GM10248 (cell line): ENCODE measurements at regions of chr2 and their contacts with region 1.

Region 1: GRCh38 chr2:200901459-200902072 is 12.4 kb downstream of the NIF3L1 start:
- DNase-seq: peak; percentile 82
- CTCF ChIP-seq: peak; percentile 64

Region 2: DNA sequence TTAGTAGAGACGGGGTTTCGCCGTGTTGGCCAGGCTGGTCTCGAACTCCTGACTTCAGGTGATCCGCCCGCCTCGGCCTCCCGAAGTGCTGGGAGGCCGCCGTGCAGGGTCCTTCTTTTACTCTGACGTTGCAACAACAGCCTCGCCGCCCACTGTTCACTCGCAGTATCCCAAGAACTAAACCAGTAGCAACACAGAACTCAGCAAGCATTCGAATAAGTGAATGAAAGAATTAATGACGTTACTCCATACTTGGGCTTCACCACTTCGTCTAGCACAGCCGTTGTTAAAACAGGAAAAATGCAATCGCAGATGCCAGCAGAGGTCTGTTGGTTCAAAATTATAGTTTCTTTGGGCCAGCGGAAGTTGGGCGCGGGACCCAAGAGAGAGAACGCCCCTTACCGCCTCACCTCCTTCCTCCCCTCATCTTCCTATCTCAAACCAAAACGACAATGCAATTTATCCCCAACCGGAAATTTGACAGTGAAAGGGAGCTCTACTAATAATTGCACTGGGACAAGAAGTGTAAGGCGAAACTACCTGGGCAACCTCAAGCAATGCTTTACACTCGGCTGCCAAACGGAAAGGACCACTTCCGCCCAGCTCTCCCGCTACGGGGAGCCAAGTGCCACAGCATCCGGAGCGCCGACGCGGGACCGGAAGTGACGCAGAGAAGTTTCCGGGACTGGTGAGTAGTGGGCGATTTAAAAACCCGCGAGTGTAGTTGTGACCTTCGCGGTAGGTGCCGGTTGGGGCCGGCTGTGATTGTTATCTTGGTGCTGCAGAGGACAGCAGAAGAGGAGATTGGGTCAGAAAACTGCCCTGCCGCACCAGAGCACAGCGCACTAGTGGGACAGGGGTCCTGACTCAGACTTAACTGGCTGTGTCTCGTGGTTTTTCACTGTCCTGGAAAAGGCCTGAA is 12.6 kb before region 1 on chr2 and contains the starts of genes NIF3L1 and PPIL3:
- CTCF ChIA-PET with region 1: interaction called, 14 read pairs
- POLR2A ChIA-PET with region 1: no interaction called
- DNase-seq: peak; percentile 91
- CTCF ChIP-seq: no peak

Region 3: DNA sequence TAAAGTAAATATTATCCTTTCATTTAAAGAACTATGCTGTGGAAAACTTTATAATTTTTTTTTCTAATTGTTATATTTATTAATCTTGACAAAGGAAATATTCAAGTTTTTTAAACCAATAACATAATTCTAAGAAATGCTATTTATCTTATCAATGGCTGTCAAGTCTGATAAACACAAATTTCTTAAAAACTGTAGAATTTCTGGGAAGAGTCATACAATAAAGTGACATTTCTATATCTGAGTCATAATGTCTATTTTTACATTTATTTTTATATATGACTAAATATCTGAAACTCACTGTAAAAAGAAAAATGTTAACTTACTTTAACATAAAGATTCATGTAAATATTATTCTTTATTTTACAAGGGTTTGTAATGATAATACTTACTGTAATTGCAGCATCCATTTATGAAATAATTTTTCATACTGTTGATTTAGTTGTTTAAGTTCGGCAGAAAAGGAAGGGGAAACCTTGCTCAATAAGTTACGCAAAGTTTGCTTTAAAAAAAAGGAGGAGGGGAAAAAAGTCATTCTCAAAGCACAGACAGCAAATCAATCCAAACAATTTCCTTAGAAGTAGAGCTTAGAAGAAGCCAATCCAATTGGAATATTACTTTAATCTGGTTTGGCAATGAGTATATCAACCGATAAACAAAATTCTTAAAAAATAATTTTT is 29.5 kb after region 1 on chr2:
- CTCF ChIA-PET with region 1: interaction called, 11 read pairs
- POLR2A ChIA-PET with region 1: no interaction called
- DNase-seq: no peak
- CTCF ChIP-seq: no peak

Region 4: DNA sequence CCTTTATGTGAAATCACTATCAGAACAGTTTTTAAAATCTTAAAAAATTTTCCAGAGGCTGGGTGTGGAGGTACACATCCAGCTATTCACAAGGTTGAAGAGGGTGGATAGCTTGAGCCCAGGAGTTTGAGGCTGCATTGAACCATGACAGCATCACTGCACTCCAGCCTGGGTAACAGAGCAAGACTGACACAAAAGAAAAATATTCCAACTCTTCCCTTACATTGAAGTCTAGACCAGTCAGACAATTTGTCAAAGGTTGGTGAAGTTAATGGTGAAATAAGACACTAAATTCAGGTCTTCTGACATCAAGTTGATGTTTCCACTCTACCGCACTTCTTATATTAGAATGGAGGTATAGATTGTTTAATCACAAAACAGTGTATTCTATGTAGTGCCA is 117.1 kb after region 1 on chr2:
- CTCF ChIA-PET with region 1: no interaction called
- POLR2A ChIA-PET with region 1: no interaction called
- DNase-seq: no peak
- CTCF ChIP-seq: no peak

Region 5: DNA sequence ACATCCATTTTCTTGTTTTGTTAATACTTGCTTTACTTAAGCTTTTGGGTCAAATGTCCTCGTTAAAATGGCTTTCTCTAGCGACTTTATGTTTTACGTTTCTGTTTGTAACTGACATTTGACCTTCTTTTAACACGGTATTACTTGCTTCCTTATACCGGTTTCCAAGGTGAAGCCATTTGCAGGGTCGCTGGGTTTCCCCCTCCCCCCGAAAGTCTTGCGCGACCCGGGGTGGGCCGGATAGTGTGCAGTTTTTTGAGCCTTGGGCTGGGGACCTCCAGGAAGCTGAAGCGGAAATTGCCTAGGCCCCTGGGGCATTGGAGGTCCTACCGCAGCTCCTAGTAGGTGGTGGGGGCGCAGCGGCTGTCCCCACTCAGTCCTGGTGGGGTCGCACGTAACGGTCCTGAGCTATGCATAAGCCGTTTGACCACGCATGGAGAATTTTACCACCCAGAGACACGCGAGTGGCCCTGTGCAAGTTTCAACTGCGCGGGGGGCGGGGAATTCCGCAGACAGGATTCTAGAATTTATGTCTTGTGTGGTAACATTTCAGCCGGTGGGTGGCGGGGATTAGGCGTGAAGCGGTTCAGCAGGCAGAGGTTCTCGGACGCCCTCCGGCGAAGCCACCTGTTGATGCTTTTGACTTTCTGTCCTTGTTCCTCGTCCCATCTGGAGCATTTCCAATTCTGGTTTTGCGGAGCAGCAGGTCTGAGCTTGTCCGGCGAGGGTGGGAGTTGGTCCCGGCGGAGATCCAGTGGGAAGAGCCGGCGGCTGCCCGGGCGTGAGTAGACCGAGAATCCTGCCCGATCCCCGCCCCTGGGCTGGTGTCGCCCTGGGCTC is 216.8 kb after region 1 on chr2:
- CTCF ChIA-PET with region 1: interaction called, 19 read pairs
- POLR2A ChIA-PET with region 1: no interaction called
- DNase-seq: peak; percentile 73
- CTCF ChIP-seq: peak; percentile 39

Region 6: GRCh38 chr2:201194097-201194496 is 292.5 kb after region 1 on chr2:
- CTCF ChIA-PET with region 1: interaction called, 13 read pairs
- POLR2A ChIA-PET with region 1: no interaction called
- DNase-seq: peak; percentile 73
- CTCF ChIP-seq: no peak